Ascending aorta (tissue), 2 donors: ENCODE measurements at regions of chr2 and their contacts with region 1.

Region 1: DNA sequence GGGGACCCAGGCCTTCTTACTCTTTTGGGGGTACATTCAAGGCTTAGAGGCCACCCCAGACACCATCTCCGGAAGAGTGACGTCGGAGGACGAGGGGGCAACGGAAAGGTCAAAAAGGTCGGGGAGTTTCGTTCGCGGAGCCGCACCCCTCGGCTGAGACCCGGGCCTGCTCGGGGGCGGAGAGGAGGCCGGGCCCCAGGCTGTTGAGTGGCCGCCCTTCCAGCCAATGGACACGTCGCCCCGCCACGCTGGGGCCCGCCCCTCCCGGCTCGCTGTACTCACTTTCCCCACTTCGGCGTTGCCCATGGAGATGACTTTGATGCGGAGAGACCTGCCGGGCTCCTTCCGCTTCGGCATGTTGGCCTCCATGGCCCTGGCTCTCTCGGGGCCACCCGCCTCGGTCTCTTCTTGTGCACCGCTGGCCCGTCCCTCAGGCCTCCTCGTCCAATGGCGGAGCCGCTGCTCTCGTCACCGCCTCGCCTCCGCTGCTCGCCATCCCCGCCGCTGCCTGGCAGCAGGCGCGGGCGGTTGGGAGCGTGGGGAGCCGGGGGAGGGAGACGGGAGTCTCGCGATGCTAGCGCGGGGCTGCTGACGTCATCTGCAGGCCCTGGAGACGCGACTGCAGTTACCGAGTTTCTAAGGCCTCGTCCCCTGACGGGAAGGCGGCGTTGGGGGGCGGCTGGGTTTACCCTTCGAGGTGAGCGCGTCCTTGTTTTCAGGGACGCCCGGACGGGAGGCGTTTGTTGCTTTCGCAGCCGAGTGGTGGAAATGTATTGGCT is at the start of gene DNAJC27:
- DNase-seq: peak; percentile 90 to 98
- H3K4me3 ChIP-seq: peak within 1 kb of the TSS; percentile 81 to 84
- H3K27ac ChIP-seq: peak within 1 kb of the TSS; percentile 97
- H3K4me1 ChIP-seq: peaks cover 0 to 2% of the 10 kb centered on the region in 2 donors
- H3K27me3 ChIP-seq: no peaks in the 10 kb centered on the region
- CTCF ChIP-seq: no peak
- total RNA-seq, gene DNAJC27: 3.6 TPM

Region 2: DNA sequence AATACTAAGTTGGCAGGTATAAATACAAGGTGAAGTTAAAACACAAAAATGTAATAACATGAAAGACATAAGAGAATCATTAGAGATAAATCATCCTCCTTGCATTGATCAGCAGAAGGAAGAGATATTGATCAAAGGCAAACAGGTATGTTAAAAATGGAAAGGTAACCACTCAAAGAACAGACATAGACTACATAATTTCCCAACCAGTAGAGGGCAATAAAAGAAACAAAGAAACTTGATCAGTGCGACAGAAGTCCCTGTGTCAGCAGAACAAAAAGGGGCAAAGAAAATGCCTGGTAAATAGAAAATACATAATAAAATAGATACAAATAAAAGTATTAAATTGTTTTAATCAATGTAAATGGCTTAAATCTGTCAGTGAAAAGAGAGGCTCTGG is 743.3 kb before region 1 on chr2:
- intact Hi-C with region 1: no loop called
- DNase-seq: no peak
- H3K4me3 ChIP-seq: no peak overlapping the region
- H3K27ac ChIP-seq: no peak overlapping the region
- H3K4me1 ChIP-seq: no peaks in the 10 kb centered on the region
- H3K27me3 ChIP-seq: no peaks in the 10 kb centered on the region
- CTCF ChIP-seq: peak in 2 of 3 experiments; percentile 16 to 36

Region 3: DNA sequence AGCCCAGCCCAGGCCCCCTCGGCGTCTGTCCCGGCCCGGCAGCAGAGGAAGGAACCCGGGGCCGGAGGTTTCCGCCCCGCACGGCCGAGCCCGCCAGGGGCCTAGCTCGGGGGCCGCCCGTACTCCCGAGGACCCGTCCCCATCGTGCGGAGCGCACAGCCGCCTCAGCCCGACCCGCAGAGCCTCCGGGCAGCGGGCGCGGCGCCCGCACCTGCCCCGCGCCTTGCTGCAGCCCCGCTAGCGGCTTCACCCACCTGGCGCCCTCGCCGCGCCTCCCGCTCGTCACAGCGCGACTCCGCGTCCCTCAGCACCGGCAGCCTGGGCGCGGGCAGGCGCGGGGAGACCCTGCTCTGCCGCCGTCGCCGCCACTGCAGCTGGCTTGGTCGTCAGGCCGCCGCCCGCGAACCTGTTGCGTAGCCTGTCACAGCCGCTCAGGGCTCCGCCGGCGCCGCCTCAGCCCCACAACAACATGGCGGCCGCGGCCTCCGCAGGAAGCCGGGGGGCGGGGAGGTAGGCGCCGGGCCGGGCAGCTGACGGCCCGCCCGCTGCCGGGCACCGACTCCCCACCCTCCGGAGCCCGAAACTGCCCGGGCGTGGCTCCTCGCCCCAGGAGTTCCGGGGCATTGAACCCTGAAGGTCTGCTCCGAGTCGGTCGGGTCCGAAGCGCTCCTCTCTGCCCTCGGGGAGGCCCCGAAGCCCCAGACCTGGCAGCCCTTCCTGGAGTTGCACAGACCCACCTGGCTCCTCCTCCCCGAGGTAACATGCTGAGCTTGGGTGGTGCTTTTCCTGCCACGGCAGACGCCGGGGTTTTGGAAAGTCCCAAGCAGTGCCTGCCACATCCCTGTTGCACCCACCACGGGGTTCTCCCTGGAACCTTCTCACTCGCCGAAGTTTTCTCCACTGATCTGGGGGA is 611.4 kb before region 1 on chr2 and contains the start of gene ITSN2:
- intact Hi-C with region 1: loop called (anchors 2 kb)
- DNase-seq: peak in 1 of 2 donors; percentile 88
- H3K4me3 ChIP-seq: peak within 1 kb of the TSS; percentile 90 to 96
- H3K27ac ChIP-seq: peak within 1 kb of the TSS; percentile 94
- H3K4me1 ChIP-seq: peaks cover 3 to 12% of the 10 kb centered on the region in 2 donors
- H3K27me3 ChIP-seq: no peaks in the 10 kb centered on the region
- CTCF ChIP-seq: no peak
- total RNA-seq, gene ITSN2: 70.0 TPM

Region 4: DNA sequence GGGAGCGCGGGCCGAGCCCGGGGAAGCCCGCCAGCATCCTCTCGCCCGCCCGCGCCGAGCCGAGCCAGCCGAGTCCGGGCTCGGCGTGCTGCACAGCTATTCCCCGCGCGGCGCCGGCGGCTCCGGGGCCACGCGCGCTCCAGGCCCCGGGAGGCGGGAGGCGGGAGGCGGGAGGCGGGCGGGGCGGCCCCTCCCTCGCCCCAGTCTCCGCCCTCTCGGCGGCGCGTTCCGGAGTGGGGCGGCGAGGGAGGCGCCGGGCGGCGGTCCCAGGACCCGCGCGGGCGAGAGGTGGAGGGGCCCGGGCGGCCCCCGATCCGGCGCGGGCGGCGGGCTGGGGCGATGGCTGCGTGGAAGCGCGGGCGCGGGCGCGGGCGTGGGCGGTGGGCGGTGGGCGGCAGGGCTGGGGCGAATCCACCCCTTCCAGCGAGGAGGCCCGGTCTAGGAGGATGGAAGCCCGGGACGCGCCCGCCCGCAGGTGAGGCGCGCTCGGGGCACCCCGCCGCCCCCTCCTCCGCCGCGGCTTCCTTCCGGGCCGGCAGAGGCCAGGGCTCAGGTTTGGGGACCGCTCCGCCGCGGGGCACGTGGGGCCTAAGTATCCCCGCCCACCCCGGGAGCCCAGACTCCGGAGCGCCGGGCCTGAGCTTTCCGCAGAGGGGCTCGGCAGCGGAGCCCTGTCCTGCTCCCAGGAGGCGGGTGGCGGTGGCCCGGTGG is 51.5 kb before region 1 on chr2 and contains the start of gene ADCY3:
- intact Hi-C with region 1: loop called (anchors 2 kb)
- DNase-seq: peak in 1 of 2 donors; percentile 75
- H3K4me3 ChIP-seq: peak within 1 kb of the TSS; percentile 72 to 93
- H3K27ac ChIP-seq: peak within 1 kb of the TSS; percentile 60 to 62
- H3K4me1 ChIP-seq: peaks cover 0 to 5% of the 10 kb centered on the region in 2 donors
- H3K27me3 ChIP-seq: no peaks in the 10 kb centered on the region
- CTCF ChIP-seq: no peak
- total RNA-seq, gene ADCY3: 140 TPM

Region 5: GRCh38 chr2:25127646-25128045 is 155.9 kb after region 1 on chr2:
- intact Hi-C with region 1: loop called (anchors 1 kb)
- DNase-seq: no peak
- H3K4me3 ChIP-seq: no peak overlapping the region
- H3K27ac ChIP-seq: no peak overlapping the region
- H3K4me1 ChIP-seq: no peaks in the 10 kb centered on the region
- H3K27me3 ChIP-seq: no peaks in the 10 kb centered on the region
- CTCF ChIP-seq: no peak

Region 6: GRCh38 chr2:25342372-25343186 is 370.9 kb after region 1 on chr2:
- intact Hi-C with region 1: loop called (anchors 10 kb)
- DNase-seq: peak; percentile 44 to 89
- H3K4me3 ChIP-seq: peak overlapping the region; percentile 90 to 95
- H3K27ac ChIP-seq: peak overlapping the region; percentile 34 to 84
- H3K4me1 ChIP-seq: peaks cover 3 to 17% of the 10 kb centered on the region in 2 donors
- H3K27me3 ChIP-seq: no peaks in the 10 kb centered on the region
- CTCF ChIP-seq: peak; percentile 99

Region 7: DNA sequence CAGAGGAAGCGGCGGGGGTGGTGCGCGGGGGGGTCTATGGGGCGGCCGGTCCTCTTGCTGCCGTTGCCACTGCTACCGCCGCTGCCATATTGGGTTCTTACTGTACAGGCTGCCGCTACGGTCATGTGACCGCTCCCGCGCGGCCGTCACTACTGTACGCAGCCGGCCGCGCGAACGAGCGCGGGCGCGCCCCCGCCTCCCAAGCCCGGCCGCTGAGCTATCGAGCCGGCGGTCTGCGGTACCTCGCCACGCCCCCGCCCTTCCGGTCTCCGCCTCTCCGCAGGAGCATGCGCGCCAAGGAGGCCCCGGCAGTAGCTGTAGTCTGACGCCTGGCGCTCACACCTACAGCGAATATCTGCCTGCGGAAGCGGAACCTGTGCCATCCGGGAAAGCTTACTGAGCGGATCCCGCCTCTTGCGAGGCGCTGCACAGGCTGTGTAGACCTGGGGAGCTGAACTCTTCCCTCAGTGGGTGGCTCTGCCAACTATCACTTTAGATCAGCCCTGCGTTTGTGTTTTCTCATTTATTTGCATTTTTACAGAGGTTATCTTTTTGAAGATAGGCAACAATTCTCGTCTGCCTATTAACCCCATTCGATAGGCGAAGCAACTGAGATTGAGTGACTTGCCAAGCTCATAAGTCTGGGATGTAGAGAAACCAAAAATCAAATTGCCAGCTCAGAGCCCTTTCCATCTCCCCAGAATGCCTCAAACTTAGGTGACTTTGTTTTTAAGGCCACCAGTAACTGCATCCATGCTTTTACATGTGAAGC is 906.8 kb after region 1 on chr2 and contains the start of gene ASXL2:
- intact Hi-C with region 1: loop called (anchors 5 kb)
- DNase-seq: peak; percentile 92 to 98
- H3K4me3 ChIP-seq: peak within 1 kb of the TSS; percentile 70 to 77
- H3K27ac ChIP-seq: peak within 1 kb of the TSS; percentile 81 to 90
- H3K4me1 ChIP-seq: peaks cover 0 to 10% of the 10 kb centered on the region in 2 donors
- H3K27me3 ChIP-seq: no peaks in the 10 kb centered on the region
- CTCF ChIP-seq: no peak
- total RNA-seq, gene ASXL2: 8.7 TPM

Region 8: DNA sequence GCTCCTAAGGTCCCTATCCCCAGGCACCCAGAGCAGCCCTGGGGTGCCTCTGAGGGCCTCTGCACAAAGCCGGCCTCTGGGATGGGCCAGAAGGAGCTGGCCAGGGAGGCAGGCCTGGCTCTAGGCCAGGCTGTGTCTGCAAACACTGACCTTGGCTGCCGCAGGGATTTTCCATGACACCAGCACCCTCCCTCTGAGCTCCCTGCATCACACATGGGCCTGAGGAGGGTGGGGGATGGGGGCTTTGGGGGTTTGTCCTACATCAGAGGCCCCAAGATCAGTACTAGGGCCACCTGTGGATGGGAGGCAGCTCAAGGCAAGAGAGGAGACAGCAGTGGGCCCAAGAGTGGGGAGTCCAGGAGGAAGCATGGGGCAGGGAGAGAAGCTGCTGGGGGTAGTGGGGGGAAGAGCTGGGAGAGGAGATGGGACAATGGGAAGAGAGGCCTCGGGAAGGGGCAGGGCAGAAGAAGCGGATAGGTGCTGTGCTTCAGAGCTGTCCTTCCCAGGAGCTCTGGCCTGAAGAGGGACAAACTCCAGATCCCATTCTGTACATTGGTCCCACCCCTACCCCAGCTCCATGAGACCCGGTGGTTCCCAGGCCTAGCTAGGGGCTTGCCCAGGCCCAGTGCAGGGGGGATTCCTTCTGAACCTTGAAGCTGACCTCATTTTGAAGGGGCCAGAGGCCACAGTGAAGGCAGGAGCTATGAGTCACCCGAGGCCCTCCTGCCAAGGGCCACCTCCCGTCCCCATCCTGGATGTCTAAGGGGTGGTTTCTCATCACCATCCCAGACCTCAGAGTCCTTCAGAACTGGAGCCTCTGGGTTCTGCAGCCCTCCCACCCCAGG is 1748.8 kb after region 1 on chr2:
- intact Hi-C with region 1: loop called (anchors 10 kb)
- DNase-seq: peak; percentile 47 to 92
- H3K4me3 ChIP-seq: no peak overlapping the region
- H3K27ac ChIP-seq: peak overlapping the region; percentile 64 to 70
- H3K4me1 ChIP-seq: peaks cover 27 to 41% of the 10 kb centered on the region in 2 donors
- H3K27me3 ChIP-seq: no peaks in the 10 kb centered on the region
- CTCF ChIP-seq: no peak